ENCODE measurements at regions of chrX and their contacts with region 1.

Region 1: GRCh38 chrX:49043220-49043986 is at the start of gene TFE3:
- DNase-seq: peak; percentile 95 to 100 (median 99)
- H3K4me3 ChIP-seq: peak within 1 kb of the TSS; percentile 54 to 82 (median 58)
- H3K27ac ChIP-seq: peak within 1 kb of the TSS; percentile 59 to 99 (median 96)
- H3K4me1 ChIP-seq: peaks cover 9% of the 10 kb centered on the region in 2 donors
- H3K27me3 ChIP-seq: no peaks in the 10 kb centered on the region
- CTCF ChIP-seq: peak; percentile 23 to 62 (median 58)
- POLR2A ChIP-seq: peak; percentile 62 to 83
- total RNA-seq, gene TFE3: 32.7 to 168 (median 94.7) TPM

Region 2: DNA sequence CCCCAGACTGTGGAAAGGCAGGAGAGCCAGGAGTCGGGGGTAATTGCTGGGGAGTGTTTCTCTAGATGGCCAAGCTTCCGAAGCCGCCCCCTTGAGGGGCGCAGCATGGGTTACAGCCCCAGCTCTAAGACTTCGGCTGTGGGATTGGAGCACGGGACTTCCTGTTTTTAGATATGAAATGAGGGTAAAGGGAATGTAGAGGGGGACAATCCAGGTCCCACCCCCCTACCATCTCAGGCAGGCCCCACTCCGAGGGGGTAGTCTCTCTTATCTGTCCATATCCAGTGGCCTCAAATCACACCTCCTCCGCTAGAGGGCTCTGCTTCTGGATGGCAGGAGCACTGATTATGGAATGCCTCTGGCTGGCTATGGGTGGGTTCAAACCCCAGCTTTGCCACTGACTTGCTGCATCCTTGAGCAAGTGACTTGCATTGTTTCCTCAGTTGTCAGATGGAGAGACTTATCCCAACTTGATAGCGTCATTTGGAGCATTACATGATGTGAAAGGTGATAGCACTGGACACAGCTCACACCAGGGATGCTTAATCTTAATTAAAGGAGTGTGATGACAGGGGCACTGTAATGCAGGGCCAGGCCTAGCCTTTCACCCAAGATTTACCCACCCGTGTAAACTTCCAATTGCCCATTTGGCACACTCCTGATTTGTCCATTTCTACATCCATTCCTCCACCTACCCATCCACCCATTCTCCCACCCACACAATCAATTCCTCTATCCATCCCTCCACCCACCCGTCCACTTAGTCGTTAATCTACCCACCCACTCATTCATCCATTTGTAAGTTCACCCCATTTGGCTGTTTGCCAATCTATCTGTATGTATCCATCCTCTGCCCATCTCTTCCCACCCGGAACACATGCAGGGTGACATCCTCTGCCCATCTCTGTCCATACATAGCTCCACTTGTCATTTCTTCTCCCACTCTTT is 70.9 kb before region 1 on chrX:
- intact Hi-C with region 1: loop called in 1 of 2 experiments (anchors 10 kb)
- DNase-seq: peak in 6 of 7 donors; percentile 32 to 74 (median 42)
- H3K4me3 ChIP-seq: peak overlapping the region in 1 of 4 donors; percentile 34
- H3K27ac ChIP-seq: peak overlapping the region in 2 of 5 donors; percentile 17 to 60
- H3K4me1 ChIP-seq: no peaks in the 10 kb centered on the region
- H3K27me3 ChIP-seq: no peaks in the 10 kb centered on the region
- CTCF ChIP-seq: peak; percentile 9 to 52 (median 42)
- POLR2A ChIP-seq: no peak

Measured in adrenal gland (tissue), 19 donors.